Psoas muscle (tissue), 8 donors: ENCODE measurements at regions of chr3 and their contacts with region 1.

Region 1: GRCh38 chr3:48429960-48430707 is at the start of gene PLXNB1:
- DNase-seq: peak; percentile 53 to 67
- ATAC-seq: peak in 3 of 4 donors; percentile 31 to 41 (median 38)
- H3K4me3 ChIP-seq: peak within 1 kb of the TSS; percentile 84
- H3K27ac ChIP-seq: peak within 1 kb of the TSS; percentile 46
- H3K4me1 ChIP-seq: peaks cover 4% of the 10 kb centered on the region
- H3K27me3 ChIP-seq: peaks cover 0 to 11% (median 3%) of the 10 kb centered on the region in 3 donors
- CTCF ChIP-seq: no peak
- total RNA-seq, gene PLXNB1: 2.5 to 3.9 (median 2.8) TPM

Region 2: GRCh38 chr3:48180021-48180420 is 250.1 kb before region 1 on chr3:
- intact Hi-C with region 1: no loop called
- DNase-seq: no peak
- ATAC-seq: no peak
- H3K4me3 ChIP-seq: no peak overlapping the region
- H3K27ac ChIP-seq: no peak overlapping the region
- H3K4me1 ChIP-seq: no peaks in the 10 kb centered on the region
- H3K27me3 ChIP-seq: no peaks in the 10 kb centered on the region
- CTCF ChIP-seq: no peak

Region 3: GRCh38 chr3:48232734-48233133 is 197.4 kb before region 1 on chr3:
- intact Hi-C with region 1: loop called in 1 of 2 experiments (anchors 5 kb)
- DNase-seq: peak; percentile 67 to 78
- ATAC-seq: peak in 3 of 4 donors; percentile 82 to 86 (median 83)
- H3K4me3 ChIP-seq: peak overlapping the region; percentile 1
- H3K27ac ChIP-seq: no peak overlapping the region
- H3K4me1 ChIP-seq: no peaks in the 10 kb centered on the region
- H3K27me3 ChIP-seq: peaks cover 0 to 9% (median 0%) of the 10 kb centered on the region in 3 donors
- CTCF ChIP-seq: peak; percentile 49

Region 4: GRCh38 chr3:48456456-48456855 is 26.3 kb after region 1 on chr3:
- intact Hi-C with region 1: loop called in 1 of 2 experiments (anchors 1 kb)
- DNase-seq: no peak
- ATAC-seq: no peak
- H3K4me3 ChIP-seq: no peak overlapping the region
- H3K27ac ChIP-seq: no peak overlapping the region
- H3K4me1 ChIP-seq: no peaks in the 10 kb centered on the region
- H3K27me3 ChIP-seq: no peaks in the 10 kb centered on the region
- CTCF ChIP-seq: no peak